Dorsolateral prefrontal cortex (tissue), 120 donors: ENCODE measurements at regions of chr1 and their contacts with region 1.

Region 1: GRCh38 chr1:100168051-100168450 is 10.0 kb downstream of the LRRC39 start:
- DNase-seq: no peak
- H3K4me3 ChIP-seq: no peak overlapping the region
- H3K27ac ChIP-seq: no peak overlapping the region
- H3K27me3 ChIP-seq: no peaks in the 10 kb centered on the region
- CTCF ChIP-seq: no peak

Region 2: DNA sequence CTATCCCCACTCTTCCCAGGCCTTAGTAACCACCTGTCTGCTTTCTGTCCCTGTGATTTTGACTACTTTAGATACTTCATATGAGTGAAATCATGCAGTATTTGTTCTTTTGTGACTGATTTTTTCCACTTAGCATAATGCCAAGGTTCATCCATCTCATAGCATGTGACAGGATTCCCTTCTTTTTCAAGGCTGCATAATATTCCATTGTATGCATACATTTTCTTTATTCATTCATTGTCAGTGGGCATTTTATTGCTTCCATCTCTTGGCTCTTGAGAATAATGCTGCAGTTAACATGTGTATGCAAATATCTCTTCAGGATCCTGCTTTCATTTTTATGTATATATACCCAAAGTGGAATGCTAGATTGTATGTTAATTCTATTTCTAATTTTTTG is 261.5 kb before region 1 on chr1:
- intact Hi-C with region 1: no loop called
- DNase-seq: no peak
- H3K4me3 ChIP-seq: no peak overlapping the region
- H3K27ac ChIP-seq: no peak overlapping the region
- H3K27me3 ChIP-seq: no peaks in the 10 kb centered on the region
- CTCF ChIP-seq: no peak

Region 3: GRCh38 chr1:100107696-100108095 is 60.4 kb before region 1 on chr1:
- intact Hi-C with region 1: no loop called
- DNase-seq: no peak
- H3K4me3 ChIP-seq: peak overlapping the region in 6 of 59 donors; percentile 2 to 25 (median 10)
- H3K27ac ChIP-seq: no peak overlapping the region
- H3K27me3 ChIP-seq: no peaks in the 10 kb centered on the region
- CTCF ChIP-seq: no peak

Region 4: DNA sequence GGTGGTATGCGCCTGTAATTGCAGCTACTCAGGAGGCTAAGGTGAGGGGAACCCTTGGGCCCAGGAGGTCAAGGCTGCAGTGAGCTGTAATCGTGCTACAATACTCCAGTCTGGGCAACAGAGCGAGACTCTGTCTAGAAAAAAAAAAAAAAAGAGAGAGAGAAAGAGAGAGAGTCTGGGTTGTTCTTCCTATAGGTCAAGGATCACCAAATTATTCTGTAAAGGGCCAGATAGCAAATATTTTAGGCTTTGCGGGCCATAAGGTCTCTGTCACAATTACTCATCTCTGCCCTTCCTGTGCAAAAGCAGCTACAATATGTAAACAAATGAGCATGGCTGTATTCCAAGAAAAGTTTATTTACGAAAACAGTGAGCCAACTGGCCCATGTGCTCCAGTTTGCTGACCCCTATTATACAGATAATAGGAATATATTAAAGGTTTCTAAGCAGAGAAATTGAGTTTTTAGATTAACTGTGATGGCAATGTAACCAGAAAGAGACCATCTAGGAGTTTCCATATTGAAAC is 37.4 kb before region 1 on chr1:
- intact Hi-C with region 1: no loop called
- DNase-seq: no peak
- H3K4me3 ChIP-seq: no peak overlapping the region
- H3K27ac ChIP-seq: no peak overlapping the region
- H3K27me3 ChIP-seq: no peaks in the 10 kb centered on the region
- CTCF ChIP-seq: no peak

Region 5: DNA sequence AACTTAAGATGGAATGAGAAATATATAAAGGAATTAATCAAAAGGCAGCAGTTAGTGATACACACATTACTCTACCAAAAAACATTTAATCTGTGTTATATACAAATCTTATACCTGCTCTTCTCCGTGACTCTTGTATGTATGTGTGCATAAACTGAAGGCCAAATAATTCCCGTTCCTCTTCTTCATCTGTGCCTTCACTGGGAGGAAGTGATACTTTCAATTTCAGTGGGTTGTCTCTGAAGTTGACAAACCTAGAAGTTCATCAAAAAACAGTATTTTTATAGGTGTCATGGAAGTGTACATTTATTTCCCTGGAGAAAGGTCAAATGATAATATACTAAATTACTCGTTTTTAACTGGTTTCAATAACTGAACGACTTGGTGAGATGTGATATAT is 15.8 kb before region 1 on chr1:
- intact Hi-C with region 1: no loop called
- DNase-seq: no peak
- H3K4me3 ChIP-seq: no peak overlapping the region
- H3K27ac ChIP-seq: peak overlapping the region in 1 of 59 donors; percentile 8
- H3K27me3 ChIP-seq: no peaks in the 10 kb centered on the region
- CTCF ChIP-seq: no peak

Region 6: DNA sequence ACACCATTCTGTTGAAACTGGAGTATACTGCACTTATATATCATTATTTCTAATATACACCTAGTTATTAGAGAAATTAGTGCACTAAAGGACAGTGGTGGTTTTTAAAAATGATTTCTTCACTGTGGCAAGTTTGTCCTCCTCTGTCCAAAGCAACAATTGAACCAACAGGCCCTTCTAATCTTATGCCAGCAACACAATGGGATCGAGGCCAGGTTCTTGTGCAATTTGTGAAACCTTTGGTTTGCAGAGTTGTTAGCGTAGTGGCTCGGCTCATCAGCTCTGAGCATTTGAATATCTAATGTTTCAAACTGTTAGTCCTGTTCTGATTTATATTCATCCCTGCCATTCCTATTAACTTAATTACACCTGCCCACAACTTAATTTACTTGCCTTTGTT is 19.9 kb after region 1 on chr1:
- intact Hi-C with region 1: loop called in 1 of 2 experiments (anchors 2 kb)
- DNase-seq: no peak
- H3K4me3 ChIP-seq: no peak overlapping the region
- H3K27ac ChIP-seq: peak overlapping the region in 26 of 59 donors; percentile 1 to 76 (median 62)
- H3K27me3 ChIP-seq: no peaks in the 10 kb centered on the region
- CTCF ChIP-seq: no peak